ENCODE measurements at regions of chr9 and their contacts with region 1.

Region 1: DNA sequence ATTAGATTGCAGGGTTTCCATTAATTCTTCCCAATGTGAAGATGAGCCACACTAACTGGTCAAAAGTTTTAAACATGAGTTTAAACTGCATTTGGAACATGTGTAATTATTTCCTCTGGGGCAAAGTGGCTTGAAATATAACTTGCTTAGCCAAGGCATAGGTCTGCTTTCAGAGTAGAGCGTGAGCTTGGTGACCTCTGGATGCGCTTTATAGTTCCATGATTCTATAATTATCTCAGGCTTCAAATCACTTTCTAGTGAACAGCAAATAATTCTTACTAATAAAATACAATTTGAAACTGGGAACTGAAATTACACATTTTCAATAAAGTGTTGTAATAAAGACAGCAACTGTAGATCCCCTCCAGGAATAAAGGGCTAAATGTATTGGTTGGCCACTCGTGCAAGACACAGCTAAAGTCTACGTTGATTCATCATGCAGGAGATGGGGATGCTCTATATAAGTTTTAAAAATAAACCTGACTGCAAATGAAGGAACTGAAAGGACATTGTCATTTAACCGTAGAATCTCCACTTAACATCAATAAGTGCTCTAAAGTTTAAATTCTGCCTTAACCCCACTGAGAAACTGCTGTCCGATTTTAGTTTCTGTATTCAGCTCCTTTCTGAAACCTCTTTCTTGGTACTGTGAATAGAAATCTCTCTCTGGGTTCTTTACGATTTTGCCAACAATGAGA is 460.0 kb downstream of the PSAT1 start:
- DNase-seq: no peak
- ATAC-seq: peak; percentile 96
- H3K4me3 Mint-ChIP-seq: peak overlapping the region; percentile 59
- H3K27ac Mint-ChIP-seq: peak overlapping the region; percentile 24
- H3K4me1 Mint-ChIP-seq: peaks cover 23% of the 10 kb centered on the region
- H3K27me3 Mint-ChIP-seq: peaks cover 5% of the 10 kb centered on the region
- CTCF ChIP-seq: no peak

Region 2: DNA sequence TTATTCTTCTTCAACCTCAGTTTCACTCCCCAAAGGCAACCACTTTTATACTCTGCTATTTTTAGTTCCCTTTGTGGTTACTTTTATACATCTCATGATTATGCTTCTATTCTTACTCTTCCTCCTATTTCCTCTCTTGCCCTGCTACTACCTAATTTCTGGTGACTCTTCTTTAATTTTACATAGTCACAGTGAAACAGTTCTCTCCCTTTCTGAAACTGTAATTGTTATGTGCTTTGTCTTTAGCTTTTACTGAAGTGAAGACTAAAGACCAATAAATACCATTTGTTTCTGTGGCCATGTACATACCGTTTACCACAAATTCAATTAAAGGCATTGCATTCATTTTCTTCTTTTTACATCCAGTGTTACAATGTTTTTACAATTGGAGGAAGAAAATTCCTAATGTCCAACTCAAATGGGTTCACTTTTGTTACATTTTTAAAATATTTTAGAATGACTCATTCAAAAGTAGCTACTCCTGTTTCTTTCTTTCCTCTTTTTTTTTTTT is 49.4 kb before region 1 on chr9:
- CTCF ChIA-PET with region 1: no interaction called
- POLR2A ChIA-PET with region 1: no interaction called
- intact Hi-C with region 1: loop called (anchors 1 kb)
- DNase-seq: no peak
- ATAC-seq: peak; percentile 78
- H3K4me3 Mint-ChIP-seq: peak overlapping the region; percentile 8
- H3K27ac Mint-ChIP-seq: peak overlapping the region; percentile 0
- H3K4me1 Mint-ChIP-seq: peaks cover 30% of the 10 kb centered on the region
- H3K27me3 Mint-ChIP-seq: no peaks in the 10 kb centered on the region
- CTCF ChIP-seq: no peak

Region 3: GRCh38 chr9:78725503-78725902 is 31.5 kb before region 1 on chr9:
- CTCF ChIA-PET with region 1: no interaction called
- POLR2A ChIA-PET with region 1: no interaction called
- intact Hi-C with region 1: loop called (anchors 2 kb)
- DNase-seq: no peak
- ATAC-seq: peak; percentile 21
- H3K4me3 Mint-ChIP-seq: peak overlapping the region; percentile 44
- H3K27ac Mint-ChIP-seq: peak overlapping the region; percentile 42
- H3K4me1 Mint-ChIP-seq: peaks cover 25% of the 10 kb centered on the region
- H3K27me3 Mint-ChIP-seq: no peaks in the 10 kb centered on the region
- CTCF ChIP-seq: no peak

Measured in activated B cell treated with CpG ODN at 0.5 μM for 24 hours (primary cell).